ENCODE measurements at regions of chr11 and their contacts with region 1.

Region 1: GRCh38 chr11:117107701-117108590 is 9.7 kb upstream of the SIK3 start:
- DNase-seq: no peak
- ATAC-seq: no peak
- H3K4me3 Mint-ChIP-seq: no peak overlapping the region
- H3K27ac Mint-ChIP-seq: no peak overlapping the region
- H3K4me1 Mint-ChIP-seq: no peaks in the 10 kb centered on the region
- H3K27me3 Mint-ChIP-seq: no peaks in the 10 kb centered on the region

Region 2: DNA sequence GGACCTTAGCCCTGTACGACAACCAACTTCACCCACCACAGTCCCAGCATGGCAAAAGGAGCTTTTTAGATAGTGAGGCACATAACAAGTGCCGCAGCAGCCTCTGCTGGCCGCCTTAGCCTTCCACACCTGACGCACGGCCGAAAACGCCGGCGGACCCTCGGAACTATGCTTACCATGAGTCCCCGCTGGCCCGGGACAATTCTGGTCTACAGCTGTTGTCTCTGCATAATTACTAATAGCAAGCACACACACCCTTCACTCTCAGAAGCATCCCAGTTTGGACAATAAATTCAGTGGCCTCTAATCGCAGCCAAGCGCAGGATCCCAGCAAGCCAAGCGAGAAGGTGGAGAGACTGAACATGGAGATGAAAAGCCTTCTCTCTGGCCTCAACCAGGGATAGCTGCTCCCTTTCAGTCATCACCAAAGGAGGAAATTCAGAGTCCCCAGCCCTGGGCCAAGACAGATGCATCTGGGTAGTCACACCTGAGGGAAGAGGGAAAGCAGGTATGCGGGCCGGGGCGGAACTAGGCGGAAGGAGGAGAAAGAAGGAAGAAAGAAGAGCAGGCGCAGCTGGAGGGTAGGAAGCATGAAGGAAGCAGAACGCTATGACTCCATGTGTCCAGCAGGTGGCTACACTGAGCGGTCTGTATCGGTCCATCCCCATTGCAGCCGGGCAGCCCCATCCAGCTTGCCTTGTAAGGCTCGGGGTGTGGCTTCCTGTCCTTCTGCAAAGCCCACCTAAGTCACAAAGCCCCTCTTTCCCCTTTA is 375.5 kb before region 1 on chr11:
- CTCF ChIA-PET with region 1: interaction called, 5 read pairs
- POLR2A ChIA-PET with region 1: no interaction called
- intact Hi-C with region 1: loop called (anchors 1 to 2 kb)
- DNase-seq: peak; percentile 78
- ATAC-seq: peak; percentile 92
- H3K4me3 Mint-ChIP-seq: no peak overlapping the region
- H3K27ac Mint-ChIP-seq: no peak overlapping the region
- H3K4me1 Mint-ChIP-seq: peaks cover 11% of the 10 kb centered on the region
- H3K27me3 Mint-ChIP-seq: no peaks in the 10 kb centered on the region

Region 3: DNA sequence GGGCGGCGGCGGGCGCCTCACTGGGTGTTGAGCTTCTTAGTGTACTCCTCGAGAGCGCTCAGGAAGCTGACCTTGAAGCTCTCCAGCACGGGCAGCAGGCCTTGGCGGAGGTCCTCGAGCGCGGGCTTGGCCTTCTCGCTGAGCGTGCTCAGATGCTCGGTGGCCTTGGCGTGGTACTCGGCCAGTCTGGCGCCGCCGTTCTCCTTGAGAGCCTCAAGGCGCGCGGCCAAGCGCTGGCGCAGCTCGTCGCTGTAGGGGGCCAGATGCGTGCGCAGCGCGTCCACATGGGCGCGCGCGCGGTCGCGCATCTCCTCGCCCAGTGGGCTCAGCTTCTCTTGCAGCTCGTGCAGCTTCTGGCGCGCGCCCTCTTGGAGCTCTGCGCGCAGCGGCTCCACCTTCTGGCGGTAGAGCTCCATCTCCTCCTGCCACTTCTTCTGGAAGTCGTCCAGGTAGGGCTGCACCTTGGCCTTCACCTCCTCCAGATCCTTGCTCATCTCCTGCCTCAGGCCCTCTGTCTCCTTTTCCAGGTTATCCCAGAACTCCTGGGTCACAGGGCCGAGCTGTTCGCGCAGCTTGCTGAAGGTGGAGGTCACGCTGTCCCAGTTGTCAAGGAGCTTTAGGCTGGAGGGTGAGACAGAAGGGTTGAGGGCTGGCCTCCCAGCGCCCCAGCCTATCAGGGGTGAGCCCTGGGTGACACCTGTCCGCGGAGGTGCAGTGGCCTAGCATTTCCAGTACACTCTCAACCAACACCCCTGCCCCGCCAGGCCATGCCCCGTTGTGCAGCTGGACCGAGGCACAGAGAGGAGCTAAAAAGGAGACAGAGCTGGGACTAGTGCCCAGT is 271.9 kb before region 1 on chr11:
- CTCF ChIA-PET with region 1: interaction called, 24 read pairs
- POLR2A ChIA-PET with region 1: no interaction called
- intact Hi-C with region 1: no loop called
- DNase-seq: peak; percentile 90
- ATAC-seq: peak; percentile 95
- H3K4me3 Mint-ChIP-seq: peak overlapping the region; percentile 59
- H3K27ac Mint-ChIP-seq: peak overlapping the region; percentile 31
- H3K4me1 Mint-ChIP-seq: peaks cover 11% of the 10 kb centered on the region
- H3K27me3 Mint-ChIP-seq: peaks cover 3% of the 10 kb centered on the region

Region 4: GRCh38 chr11:116874254-116874653 is 233.7 kb before region 1 on chr11:
- CTCF ChIA-PET with region 1: interaction called, 43 read pairs
- POLR2A ChIA-PET with region 1: no interaction called
- intact Hi-C with region 1: loop called in 1 of 2 experiments (anchors 1 kb)
- DNase-seq: no peak
- ATAC-seq: no peak
- H3K4me3 Mint-ChIP-seq: no peak overlapping the region
- H3K27ac Mint-ChIP-seq: peak overlapping the region; percentile 20
- H3K4me1 Mint-ChIP-seq: peaks cover 6% of the 10 kb centered on the region
- H3K27me3 Mint-ChIP-seq: no peaks in the 10 kb centered on the region

Region 5: GRCh38 chr11:116879800-116880625 is 227.9 kb before region 1 on chr11:
- CTCF ChIA-PET with region 1: interaction called, 43 read pairs
- POLR2A ChIA-PET with region 1: no interaction called
- intact Hi-C with region 1: loop called (anchors 1 kb)
- DNase-seq: no peak
- ATAC-seq: peak; percentile 65
- H3K4me3 Mint-ChIP-seq: no peak overlapping the region
- H3K27ac Mint-ChIP-seq: no peak overlapping the region
- H3K4me1 Mint-ChIP-seq: peaks cover 22% of the 10 kb centered on the region
- H3K27me3 Mint-ChIP-seq: no peaks in the 10 kb centered on the region

Region 6: DNA sequence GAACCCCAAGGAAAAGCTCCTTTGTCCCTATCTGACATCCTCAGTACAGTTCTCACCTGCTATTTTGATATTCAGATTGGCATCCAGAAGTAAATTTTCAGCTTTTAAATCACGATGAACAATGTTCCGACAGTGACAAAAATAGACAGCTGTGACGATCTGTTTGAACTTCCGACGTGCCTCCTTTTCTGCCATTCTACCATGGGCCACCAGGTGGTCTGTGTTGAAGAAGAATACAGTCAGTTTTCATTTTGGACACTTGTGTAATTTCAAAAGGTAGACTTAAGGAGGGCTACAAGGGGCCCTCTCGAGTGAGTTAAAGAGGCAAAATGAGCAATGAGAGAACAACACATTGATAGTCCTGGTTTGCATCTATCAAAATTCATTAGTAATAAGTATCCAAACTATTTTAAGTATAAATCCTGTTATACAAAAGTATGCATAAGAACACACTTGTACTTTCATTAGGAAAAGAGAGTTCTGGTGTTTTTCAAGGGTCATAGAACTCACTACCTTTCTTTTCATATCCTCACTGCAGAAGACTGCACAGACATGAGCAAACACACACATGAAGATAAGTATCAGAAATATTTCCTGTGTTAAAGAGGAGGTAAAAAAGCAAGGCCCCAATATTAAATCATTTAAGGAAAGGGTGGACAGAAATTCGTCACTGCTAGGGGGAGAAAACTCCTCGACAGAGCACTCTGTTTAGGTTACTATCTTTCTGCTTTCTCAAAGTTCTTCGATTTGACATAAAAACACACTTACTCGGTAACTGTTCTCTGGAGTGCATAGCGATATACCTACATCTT is 180.6 kb before region 1 on chr11:
- CTCF ChIA-PET with region 1: interaction called, 17 read pairs
- POLR2A ChIA-PET with region 1: no interaction called
- intact Hi-C with region 1: no loop called
- DNase-seq: peak; percentile 72
- ATAC-seq: peak; percentile 33
- H3K4me3 Mint-ChIP-seq: peak overlapping the region; percentile 18
- H3K27ac Mint-ChIP-seq: peak overlapping the region; percentile 49
- H3K4me1 Mint-ChIP-seq: peaks cover 74% of the 10 kb centered on the region
- H3K27me3 Mint-ChIP-seq: no peaks in the 10 kb centered on the region

Region 7: DNA sequence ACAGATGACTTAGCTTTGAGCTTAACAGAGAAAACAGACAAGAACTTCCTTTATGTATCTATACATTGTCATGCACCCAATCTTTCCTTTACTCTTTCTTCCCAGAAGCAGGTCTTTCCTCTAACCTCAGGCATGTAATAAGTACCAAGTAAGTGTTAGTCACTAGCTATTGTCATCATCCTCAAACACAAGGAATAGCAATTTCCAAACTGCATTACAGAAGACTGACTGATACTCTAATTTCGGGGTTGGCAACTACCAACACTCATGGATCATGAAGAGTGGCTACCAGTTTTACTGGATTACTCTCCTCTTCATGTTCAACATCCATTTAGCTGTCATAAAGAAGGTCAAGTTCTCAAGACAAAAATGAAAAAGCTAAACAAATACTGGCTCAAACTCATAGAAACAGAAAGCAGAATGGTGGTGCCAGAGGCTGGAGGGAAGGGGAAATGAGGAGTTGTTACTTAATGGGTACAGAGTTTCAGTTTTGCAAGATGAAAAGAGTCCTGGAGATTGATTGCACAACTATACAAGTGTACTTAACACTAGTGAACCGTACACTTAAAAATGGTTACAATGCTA is 121.3 kb before region 1 on chr11:
- CTCF ChIA-PET with region 1: no interaction called
- POLR2A ChIA-PET with region 1: no interaction called
- intact Hi-C with region 1: no loop called
- DNase-seq: peak; percentile 31
- ATAC-seq: peak; percentile 82
- H3K4me3 Mint-ChIP-seq: peak overlapping the region; percentile 30
- H3K27ac Mint-ChIP-seq: peak overlapping the region; percentile 76
- H3K4me1 Mint-ChIP-seq: peaks cover 71% of the 10 kb centered on the region
- H3K27me3 Mint-ChIP-seq: no peaks in the 10 kb centered on the region

Region 8: GRCh38 chr11:117226388-117227385 is 118.7 kb after region 1 on chr11:
- CTCF ChIA-PET with region 1: interaction called, 3 read pairs
- POLR2A ChIA-PET with region 1: no interaction called
- intact Hi-C with region 1: loop called in 1 of 2 experiments (anchors 1 kb)
- DNase-seq: peak; percentile 59
- ATAC-seq: peak; percentile 52
- H3K4me3 Mint-ChIP-seq: no peak overlapping the region
- H3K27ac Mint-ChIP-seq: peak overlapping the region; percentile 25
- H3K4me1 Mint-ChIP-seq: peaks cover 30% of the 10 kb centered on the region
- H3K27me3 Mint-ChIP-seq: no peaks in the 10 kb centered on the region

Measured in activated CD4-positive, alpha-beta T cell treated with anti-CD3 and anti-CD28 coated beads for 36 hours (primary cell).